Lower lobe of right lung (tissue), 2 donors: ENCODE measurements at regions of chr17 and their contacts with region 1.

Region 1: DNA sequence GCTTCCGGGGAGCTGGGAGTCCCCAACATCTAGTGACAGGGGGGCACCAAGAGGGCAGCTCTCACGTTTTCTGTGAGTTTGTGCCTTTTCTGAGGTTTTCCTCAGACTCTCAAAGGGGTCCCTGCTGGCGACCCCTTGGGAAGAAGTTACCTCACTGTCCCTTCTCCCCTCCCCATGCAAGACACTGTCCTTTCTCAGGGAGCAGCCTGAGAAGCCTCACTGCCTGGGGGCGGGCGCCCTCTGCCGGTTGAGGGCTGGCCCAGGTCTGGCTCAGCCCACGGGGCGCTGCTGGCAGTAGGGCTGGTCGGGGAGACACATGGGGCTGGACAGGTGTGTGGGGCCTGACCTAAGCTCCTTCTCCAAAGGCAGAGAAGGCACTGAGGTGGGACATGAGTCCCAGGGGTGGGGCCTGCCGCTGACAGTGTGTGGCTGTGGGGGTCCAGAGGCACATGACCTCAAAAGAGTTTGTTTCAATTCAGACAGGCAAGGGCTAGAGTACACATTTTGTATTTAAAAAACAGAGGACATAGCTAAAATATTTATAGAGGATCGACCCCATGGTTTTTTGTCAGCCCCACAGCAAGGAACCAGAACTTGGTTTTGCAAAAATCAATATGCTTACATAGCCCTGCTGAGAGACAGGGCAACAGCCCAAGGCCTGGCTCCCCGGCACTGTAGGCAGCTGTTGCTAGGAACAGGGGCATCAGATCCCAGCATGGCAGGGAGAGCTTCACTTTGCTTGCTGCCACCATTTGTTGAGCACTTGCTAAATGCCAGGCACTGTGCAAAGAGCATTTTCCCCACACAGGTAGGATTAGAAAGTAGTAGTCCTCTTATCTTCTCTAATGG is 18.5 kb upstream of the ALDH3A1 start:
- DNase-seq: peak; percentile 82
- ATAC-seq: peak; percentile 90 to 92
- H3K4me3 ChIP-seq: no peak overlapping the region
- H3K27ac ChIP-seq: no peak overlapping the region
- H3K4me1 ChIP-seq: peaks cover 8% of the 10 kb centered on the region
- H3K27me3 ChIP-seq: no peaks in the 10 kb centered on the region
- CTCF ChIP-seq: peak; percentile 97

Region 2: DNA sequence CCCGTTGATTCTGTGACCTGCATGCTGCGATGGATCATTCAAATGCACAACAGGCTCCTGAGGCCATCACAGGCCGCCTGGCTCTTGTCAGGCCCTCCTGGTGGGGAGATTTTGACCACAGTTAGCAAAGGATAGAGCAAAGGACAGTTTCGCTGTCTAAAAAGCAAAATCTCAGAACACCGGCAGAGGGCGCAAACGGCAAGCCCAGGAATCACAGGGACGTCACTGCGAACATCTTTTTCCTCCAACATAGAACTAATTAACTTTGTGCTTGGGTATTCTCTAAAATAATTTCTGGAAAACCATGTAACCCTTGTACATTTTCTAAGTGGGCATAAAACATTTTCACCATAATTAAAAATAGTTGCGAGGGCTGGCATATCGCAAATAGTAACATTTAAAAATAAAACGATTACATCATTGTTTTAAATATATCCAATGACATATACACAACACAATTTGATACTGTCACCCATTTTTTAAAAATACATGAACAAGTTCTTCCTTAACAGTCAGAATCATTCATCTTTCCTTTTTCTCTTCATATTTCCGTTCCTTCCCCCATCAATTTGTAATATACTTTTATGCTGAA is 252.7 kb before region 1 on chr17:
- intact Hi-C with region 1: loop called (anchors 5 kb)
- DNase-seq: peak; percentile 65
- ATAC-seq: peak; percentile 75 to 87
- H3K4me3 ChIP-seq: no peak overlapping the region
- H3K27ac ChIP-seq: no peak overlapping the region
- H3K4me1 ChIP-seq: peaks cover 10% of the 10 kb centered on the region
- H3K27me3 ChIP-seq: no peaks in the 10 kb centered on the region
- CTCF ChIP-seq: peak; percentile 89

Region 3: DNA sequence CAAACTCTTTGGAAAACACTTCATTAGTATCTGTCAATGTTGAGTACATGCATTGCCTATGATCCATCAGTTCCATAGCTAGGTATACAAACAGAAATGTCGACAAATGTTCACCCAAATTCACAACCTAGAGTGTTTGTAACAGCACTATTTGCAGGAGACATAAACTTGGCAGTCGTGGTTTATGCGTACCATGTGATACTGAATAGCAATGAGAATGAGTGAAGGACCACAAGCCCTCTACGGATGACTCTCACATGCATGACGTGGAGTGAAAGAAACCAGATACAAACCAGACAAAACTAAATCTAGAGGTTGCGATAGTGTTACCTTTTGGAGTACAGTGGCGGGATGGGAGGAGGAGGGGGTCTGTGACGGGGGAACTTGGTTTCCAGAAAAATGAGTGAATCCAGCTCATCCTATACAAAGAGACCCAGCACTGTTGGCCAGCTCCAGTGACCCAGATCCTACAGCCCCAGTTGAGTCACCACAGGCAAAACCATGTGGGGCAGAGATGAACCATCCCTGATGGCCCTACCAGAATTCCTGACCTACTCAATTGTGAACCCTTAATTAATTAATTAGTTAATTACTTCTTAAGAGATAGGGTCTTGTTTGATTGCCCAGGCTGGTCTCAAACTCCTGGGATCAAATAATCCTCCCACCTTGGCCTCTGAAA is 117.0 kb after region 1 on chr17:
- intact Hi-C with region 1: no loop called
- DNase-seq: peak; percentile 10
- ATAC-seq: no peak
- H3K4me3 ChIP-seq: no peak overlapping the region
- H3K27ac ChIP-seq: no peak overlapping the region
- H3K4me1 ChIP-seq: no peaks in the 10 kb centered on the region
- H3K27me3 ChIP-seq: no peaks in the 10 kb centered on the region
- CTCF ChIP-seq: no peak